Panc1 (cell line): ENCODE measurements at regions of chr3 and their contacts with region 1.

Region 1: GRCh38 chr3:17645072-17645698 is 97.2 kb downstream of the TBC1D5 start:
- DNase-seq: peak; percentile 32
- ATAC-seq: peak; percentile 60; the same call in 1 of the 2 replicates
- H3K4me3 ChIP-seq: no peak overlapping the region
- H3K27ac ChIP-seq: no peak overlapping the region
- H3K4me1 ChIP-seq: no peaks in the 10 kb centered on the region
- H3K27me3 ChIP-seq: no peaks in the 10 kb centered on the region
- CTCF ChIP-seq: peak; percentile 69; the same call in 1 of the 2 replicates

Region 2: DNA sequence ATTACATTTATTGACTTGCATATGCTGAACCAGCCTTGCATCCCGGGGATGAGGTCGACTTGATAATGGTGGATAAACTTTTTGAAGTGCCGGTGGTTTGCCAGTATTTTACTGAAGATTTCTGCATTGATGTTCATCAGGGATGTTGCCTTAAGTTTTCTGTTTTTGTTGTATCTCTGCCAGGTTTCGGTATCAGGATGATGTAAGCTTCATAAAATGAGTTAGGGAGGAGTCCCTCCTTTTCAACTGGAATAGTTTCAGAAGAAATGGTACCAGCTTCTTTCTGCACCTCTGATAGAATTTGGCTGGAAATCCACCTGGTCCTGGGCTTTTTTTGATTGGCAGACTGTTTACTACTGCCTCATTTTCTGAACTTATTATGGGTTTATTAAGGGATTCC is 153.6 kb before region 1 on chr3:
- CTCF ChIA-PET with region 1: no interaction called
- POLR2A ChIA-PET with region 1: no interaction called
- in situ Hi-C with region 1: no loop called
- intact Hi-C with region 1: no loop called
- DNase-seq: no peak
- ATAC-seq: no peak
- H3K4me3 ChIP-seq: no peak overlapping the region
- H3K27ac ChIP-seq: no peak overlapping the region
- H3K4me1 ChIP-seq: no peaks in the 10 kb centered on the region
- H3K27me3 ChIP-seq: no peaks in the 10 kb centered on the region
- CTCF ChIP-seq: no peak

Region 3: GRCh38 chr3:17730318-17730967 is 85.3 kb after region 1 on chr3:
- CTCF ChIA-PET with region 1: no interaction called
- POLR2A ChIA-PET with region 1: no interaction called
- in situ Hi-C with region 1: no loop called
- intact Hi-C with region 1: loop called (anchors 5 kb)
- DNase-seq: no peak
- ATAC-seq: peak; percentile 99
- H3K4me3 ChIP-seq: no peak overlapping the region
- H3K27ac ChIP-seq: no peak overlapping the region
- H3K4me1 ChIP-seq: peaks cover 9% of the 10 kb centered on the region
- H3K27me3 ChIP-seq: no peaks in the 10 kb centered on the region
- CTCF ChIP-seq: no peak